ENCODE measurements at regions of chr9 and their contacts with region 1.

Region 1: DNA sequence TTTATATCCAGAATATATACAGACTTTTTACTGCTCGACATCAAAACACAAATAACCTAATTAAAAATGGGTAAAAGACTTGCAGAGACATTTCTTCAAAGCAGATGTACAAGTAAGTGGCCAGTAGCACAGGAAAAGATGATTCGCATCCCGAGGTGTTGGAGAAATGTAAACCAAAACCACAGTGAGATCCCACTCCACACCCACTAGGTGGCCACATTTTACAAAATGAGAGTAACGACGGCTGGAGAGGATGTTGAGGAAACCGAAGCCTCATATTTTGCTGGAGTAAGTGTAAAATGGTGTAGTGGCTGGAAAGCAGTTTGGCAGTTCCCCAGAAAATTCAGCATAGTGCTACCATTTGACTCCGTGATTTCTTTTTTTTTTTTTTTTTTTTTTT is 21.2 kb upstream of the GBGT1 start:
- DNase-seq: no peak
- H3K4me3 ChIP-seq: no peak overlapping the region
- H3K27ac ChIP-seq: no peak overlapping the region
- H3K4me1 ChIP-seq: peaks cover 5% of the 10 kb centered on the region
- H3K27me3 ChIP-seq: peaks cover 37% of the 10 kb centered on the region
- CTCF ChIP-seq: peak; percentile 74

Region 2: DNA sequence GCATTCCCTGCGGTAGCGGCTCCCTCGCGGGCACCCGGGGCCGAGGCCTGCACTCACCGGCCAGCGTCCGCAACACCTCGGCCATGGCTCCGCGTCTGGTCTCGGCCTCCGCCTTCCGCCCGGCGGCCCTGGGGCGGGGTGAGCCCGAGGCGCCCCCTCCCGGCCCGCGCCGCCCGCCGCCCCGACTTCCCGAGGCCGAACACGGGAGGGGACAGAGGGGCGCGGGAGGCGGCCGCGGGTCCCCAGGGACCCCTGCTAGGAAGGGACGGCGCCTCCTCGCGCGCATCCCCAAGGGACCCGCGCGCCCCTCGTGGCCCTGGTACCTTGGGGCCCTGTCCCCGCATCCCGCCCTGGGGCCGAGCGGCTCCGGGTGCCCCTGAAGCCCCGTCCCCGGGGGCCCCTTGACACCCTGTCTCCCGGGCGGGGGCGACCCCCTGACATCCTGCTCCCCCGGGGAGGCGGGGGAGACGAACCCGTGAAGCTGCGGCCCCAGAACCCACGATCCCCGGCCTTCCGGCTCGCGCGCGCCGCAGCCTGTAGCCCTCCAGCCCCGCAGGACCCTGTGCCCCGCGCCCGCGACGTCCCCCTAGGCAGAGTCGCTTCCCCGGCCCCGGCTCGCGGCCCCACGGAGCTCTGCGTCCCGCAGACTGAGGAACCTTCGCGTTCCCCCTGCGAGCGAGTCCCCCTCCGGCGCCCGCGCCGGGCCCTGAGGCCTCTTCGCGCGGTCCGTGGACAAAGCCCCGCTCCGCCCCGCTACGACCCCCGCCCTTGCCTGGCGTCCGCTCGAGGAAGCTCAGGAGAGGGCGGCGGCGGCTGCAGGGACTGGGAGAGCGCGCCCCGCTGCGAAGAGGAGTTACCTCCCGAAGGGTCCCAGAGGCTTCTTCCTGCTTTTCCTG is 90.4 kb after region 1 on chr9 and contains the start of gene ABO:
- intact Hi-C with region 1: loop called (anchors 10 kb)
- DNase-seq: peak; percentile 57
- H3K4me3 ChIP-seq: peak within 1 kb of the TSS; percentile 75
- H3K27ac ChIP-seq: peak within 1 kb of the TSS; percentile 86
- H3K4me1 ChIP-seq: peaks cover 26% of the 10 kb centered on the region
- H3K27me3 ChIP-seq: peaks cover 59% of the 10 kb centered on the region
- CTCF ChIP-seq: peak; percentile 59
- total RNA-seq, gene ABO: 2.3 TPM

Region 3: DNA sequence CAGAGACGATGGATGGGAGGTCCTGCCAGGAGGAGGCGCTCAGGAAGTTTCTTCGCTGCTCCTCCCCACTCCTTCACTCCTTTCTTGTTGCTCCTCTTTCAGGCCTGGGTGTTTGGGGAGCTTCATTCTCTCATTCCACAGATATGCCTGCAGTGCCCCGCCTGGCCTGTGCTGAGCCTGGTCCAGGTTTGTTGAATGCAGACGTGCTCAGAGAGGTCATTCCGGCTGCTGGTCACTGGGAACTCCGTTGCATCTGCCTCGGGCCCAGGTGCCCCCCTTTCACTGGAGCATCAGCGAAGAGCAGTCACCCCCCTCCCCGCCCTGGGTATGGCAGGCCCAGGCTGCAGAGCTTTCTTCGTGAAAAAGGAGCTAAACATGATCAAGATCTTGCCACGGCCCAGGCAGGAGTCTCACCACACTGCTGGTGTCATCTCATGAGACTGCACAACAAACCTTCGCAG is 135.5 kb after region 1 on chr9:
- intact Hi-C with region 1: loop called (anchors 10 kb)
- DNase-seq: no peak
- H3K4me3 ChIP-seq: no peak overlapping the region
- H3K27ac ChIP-seq: no peak overlapping the region
- H3K4me1 ChIP-seq: no peaks in the 10 kb centered on the region
- H3K27me3 ChIP-seq: peaks cover 14% of the 10 kb centered on the region
- CTCF ChIP-seq: no peak

Region 4: GRCh38 chr9:133485361-133486260 is 300.6 kb after region 1 on chr9:
- intact Hi-C with region 1: loop called (anchors 10 kb)
- DNase-seq: no peak
- H3K4me3 ChIP-seq: no peak overlapping the region
- H3K27ac ChIP-seq: no peak overlapping the region
- H3K4me1 ChIP-seq: no peaks in the 10 kb centered on the region
- H3K27me3 ChIP-seq: peaks cover 30% of the 10 kb centered on the region
- CTCF ChIP-seq: no peak